ENCODE measurements at regions of chr4 and their contacts with region 1.

Region 1: DNA sequence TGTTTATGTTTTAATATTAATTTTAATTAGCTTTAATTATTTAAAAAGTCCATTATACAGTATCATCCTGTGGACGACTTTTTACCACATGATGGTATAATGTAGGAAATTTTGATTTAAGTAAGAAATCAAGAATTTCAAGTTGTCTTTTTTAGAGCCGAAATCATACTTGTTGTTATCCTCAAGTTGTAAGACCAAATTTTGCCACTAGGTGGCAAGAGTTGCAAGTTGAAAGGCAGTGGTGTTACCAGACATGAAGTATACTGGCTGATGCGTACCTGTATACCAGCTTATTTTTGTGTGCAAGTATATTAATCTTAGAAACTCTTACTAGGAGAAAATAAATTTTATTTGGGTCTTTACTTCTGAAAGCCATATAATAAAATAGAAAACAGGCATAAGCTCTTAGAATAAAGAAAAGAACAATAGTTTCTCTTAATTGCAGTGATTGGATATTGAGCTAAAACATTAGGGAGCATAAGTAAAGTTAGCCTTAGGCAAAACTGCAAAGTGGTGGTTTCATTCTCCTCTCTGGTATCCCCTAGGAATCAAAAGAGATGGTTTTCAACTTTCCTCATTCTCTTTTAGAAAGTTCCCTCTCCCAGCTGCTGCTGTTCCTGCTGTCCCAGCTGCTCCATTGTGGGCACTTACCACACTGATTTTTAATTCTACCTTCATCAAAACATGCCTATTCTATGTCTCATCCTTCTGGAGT is 118.0 kb upstream of the WDFY3 start:
- DNase-seq: peak; percentile 20
- H3K4me3 ChIP-seq: no peak overlapping the region
- H3K27ac ChIP-seq: no peak overlapping the region
- H3K4me1 ChIP-seq: no peaks in the 10 kb centered on the region
- H3K27me3 ChIP-seq: no peaks in the 10 kb centered on the region
- CTCF ChIP-seq: peak; percentile 82
- EP300 ChIP-seq: no peak
- RAD21 ChIP-seq: peak; percentile 78

Region 2: GRCh38 chr4:84681486-84682274 is 402.9 kb before region 1 on chr4:
- CTCF ChIA-PET with region 1: no interaction called
- POLR2A ChIA-PET with region 1: no interaction called
- DNase-seq: no peak
- H3K4me3 ChIP-seq: no peak overlapping the region
- H3K27ac ChIP-seq: peak overlapping the region; percentile 50 to 51
- H3K4me1 ChIP-seq: peaks cover 4 to 16% of the 10 kb centered on the region in 2 experiments; a peak in 3 of 4 replicates
- H3K27me3 ChIP-seq: no peaks in the 10 kb centered on the region
- CTCF ChIP-seq: peak; percentile 40
- EP300 ChIP-seq: no peak
- RAD21 ChIP-seq: no peak

Region 3: DNA sequence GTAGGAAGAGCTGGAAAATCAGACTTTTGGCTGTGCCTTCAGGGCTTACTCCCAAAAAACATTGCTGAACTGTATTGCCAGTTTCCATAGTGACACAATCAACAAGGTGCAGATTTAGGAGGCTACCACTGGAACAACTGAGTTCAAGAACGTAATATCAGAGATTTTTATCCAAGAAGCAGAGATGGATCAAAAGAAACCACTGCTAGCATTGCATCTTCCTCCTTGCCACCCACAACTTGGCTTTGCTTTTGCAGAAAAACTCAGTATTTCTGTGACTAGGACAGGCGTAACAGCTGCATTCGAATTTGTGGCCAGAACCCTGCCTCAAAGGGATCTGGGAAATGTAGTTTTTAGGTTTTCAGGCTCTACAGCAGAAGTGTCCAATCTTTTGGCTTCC is 90.3 kb before region 1 on chr4:
- CTCF ChIA-PET with region 1: no interaction called
- POLR2A ChIA-PET with region 1: no interaction called
- DNase-seq: peak; percentile 2
- H3K4me3 ChIP-seq: no peak overlapping the region; a peak in 1 of 4 replicates
- H3K27ac ChIP-seq: no peak overlapping the region
- H3K4me1 ChIP-seq: no peaks in the 10 kb centered on the region
- H3K27me3 ChIP-seq: no peaks in the 10 kb centered on the region
- CTCF ChIP-seq: no peak
- EP300 ChIP-seq: no peak
- RAD21 ChIP-seq: no peak

Region 4: DNA sequence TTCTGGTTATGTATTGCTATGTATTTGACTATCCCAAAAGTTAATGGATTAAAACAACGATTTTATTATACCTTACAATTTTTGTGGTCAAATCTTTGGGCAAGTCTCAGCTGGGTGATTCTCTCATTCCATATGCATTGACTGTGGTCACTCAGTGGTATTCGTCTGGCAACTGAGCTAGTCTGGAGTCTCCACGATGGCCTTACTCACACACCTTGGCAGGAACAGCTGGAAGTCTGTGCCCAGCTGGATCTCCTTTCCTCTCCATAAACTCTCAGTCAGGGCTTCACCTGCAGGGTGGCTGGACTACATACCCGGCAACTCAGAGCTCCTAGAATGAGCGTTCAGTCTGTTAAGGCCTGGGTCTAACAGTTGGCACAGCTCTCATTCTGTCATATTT is 23.0 kb after region 1 on chr4:
- CTCF ChIA-PET with region 1: interaction called, 12 read pairs
- POLR2A ChIA-PET with region 1: no interaction called
- DNase-seq: no peak
- H3K4me3 ChIP-seq: no peak overlapping the region
- H3K27ac ChIP-seq: no peak overlapping the region; a peak in 1 of 4 replicates
- H3K4me1 ChIP-seq: peaks cover 0 to 4% of the 10 kb centered on the region in 2 experiments; a peak in 2 of 4 replicates
- H3K27me3 ChIP-seq: no peaks in the 10 kb centered on the region
- CTCF ChIP-seq: no peak
- EP300 ChIP-seq: no peak
- RAD21 ChIP-seq: no peak

Region 5: GRCh38 chr4:85147439-85148076 is 63.0 kb after region 1 on chr4:
- CTCF ChIA-PET with region 1: interaction called, 36 read pairs
- POLR2A ChIA-PET with region 1: no interaction called
- DNase-seq: peak; percentile 52
- H3K4me3 ChIP-seq: no peak overlapping the region
- H3K27ac ChIP-seq: no peak overlapping the region
- H3K4me1 ChIP-seq: no peaks in the 10 kb centered on the region; a peak in 1 of 4 replicates
- H3K27me3 ChIP-seq: no peaks in the 10 kb centered on the region
- CTCF ChIP-seq: peak; percentile 76
- EP300 ChIP-seq: no peak
- RAD21 ChIP-seq: peak; percentile 82

Region 6: DNA sequence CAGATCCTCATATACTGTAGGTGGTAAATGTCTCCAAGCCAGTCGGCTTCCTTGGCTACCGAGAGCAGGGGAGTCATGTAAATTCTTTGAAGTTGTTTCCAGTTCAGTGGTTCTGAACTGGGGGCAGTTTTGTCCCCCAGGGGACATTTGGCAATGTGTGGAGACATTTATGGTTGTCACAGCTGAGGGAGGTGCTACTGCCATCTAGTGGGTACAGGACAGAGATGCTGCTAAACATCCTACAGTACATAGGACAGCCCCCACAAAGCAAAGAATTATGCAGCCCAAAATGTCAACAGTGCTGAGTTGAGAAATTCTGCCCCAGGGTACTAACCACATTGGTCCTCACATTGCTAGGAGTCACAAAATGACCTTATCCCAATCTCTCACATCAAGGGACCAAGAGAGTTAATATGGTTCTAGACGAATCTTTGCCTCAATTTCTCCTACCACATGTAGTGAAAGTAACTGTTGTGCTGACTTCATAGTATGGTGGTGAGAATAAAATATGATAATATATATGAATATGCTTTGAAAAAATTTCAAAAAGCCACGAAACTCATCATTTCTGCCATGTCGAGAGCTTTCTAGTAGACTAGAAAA is 286.0 kb after region 1 on chr4:
- CTCF ChIA-PET with region 1: interaction called, 25 read pairs
- POLR2A ChIA-PET with region 1: no interaction called
- DNase-seq: peak; percentile 5
- H3K4me3 ChIP-seq: no peak overlapping the region
- H3K27ac ChIP-seq: no peak overlapping the region
- H3K4me1 ChIP-seq: no peaks in the 10 kb centered on the region
- H3K27me3 ChIP-seq: no peaks in the 10 kb centered on the region
- CTCF ChIP-seq: peak; percentile 78
- EP300 ChIP-seq: no peak
- RAD21 ChIP-seq: peak; percentile 71

Region 7: DNA sequence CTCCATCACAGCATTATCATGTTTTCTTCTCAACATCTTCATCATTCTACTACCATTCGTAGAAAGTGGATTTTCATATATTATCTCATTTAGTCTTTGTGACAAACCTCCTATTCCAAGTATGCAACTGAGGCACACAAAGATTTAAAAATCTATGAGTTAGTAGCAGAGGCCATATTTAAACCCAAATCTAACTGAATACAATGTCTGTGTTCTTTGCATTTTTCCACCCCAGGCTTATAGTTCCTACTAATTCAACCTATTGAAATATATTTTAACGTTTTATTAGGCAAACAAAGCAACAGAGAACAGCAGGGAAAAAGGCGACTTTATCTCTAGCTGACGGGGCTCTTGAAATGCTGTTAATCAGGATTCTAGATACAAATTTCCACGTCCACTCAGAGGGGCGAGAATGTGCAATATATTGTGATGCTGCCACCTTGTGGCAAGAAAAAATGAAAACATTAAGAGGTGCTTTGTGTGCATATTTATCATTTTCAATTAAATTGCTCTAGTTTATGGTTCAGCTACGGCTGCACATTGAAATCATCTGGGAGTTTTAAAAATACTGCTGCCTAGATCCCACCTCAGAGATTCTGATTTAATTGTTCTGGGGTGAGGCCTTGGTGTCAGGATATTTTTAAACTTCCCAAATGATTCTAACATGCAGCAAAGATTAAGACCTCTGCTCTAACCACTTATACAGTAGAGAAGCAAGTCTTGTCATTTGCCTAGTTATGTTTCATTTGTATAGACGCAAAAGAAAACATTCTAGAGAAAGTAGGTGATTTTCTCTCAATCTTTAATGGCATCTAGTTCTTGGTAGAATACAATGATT is 959.4 kb after region 1 on chr4:
- CTCF ChIA-PET with region 1: interaction called, 12 read pairs
- POLR2A ChIA-PET with region 1: no interaction called
- DNase-seq: peak; percentile 23
- H3K4me3 ChIP-seq: no peak overlapping the region
- H3K27ac ChIP-seq: no peak overlapping the region; a peak in 1 of 4 replicates
- H3K4me1 ChIP-seq: no peaks in the 10 kb centered on the region; a peak in 1 of 4 replicates
- H3K27me3 ChIP-seq: no peaks in the 10 kb centered on the region
- CTCF ChIP-seq: peak; percentile 79
- EP300 ChIP-seq: no peak
- RAD21 ChIP-seq: peak; percentile 87

Measured in SK-N-SH (cell line).